ENCODE measurements at regions of chr7 and their contacts with region 1.

Region 1: GRCh38 chr7:123719197-123719721 is 29.5 kb downstream of the WASL start:
- DNase-seq: no peak
- H3K4me3 ChIP-seq: no peak overlapping the region
- H3K27ac ChIP-seq: no peak overlapping the region
- H3K4me1 ChIP-seq: peaks cover 19% of the 10 kb centered on the region
- H3K27me3 ChIP-seq: no peaks in the 10 kb centered on the region
- CTCF ChIP-seq: no peak

Region 2: GRCh38 chr7:123666492-123666891 is 52.8 kb before region 1 on chr7:
- CTCF ChIA-PET with region 1: no interaction called
- dilution Hi-C with region 1: no loop called
- in situ Hi-C with region 1: no loop called
- intact Hi-C with region 1: no loop called
- DNase-seq: peak; percentile 55
- H3K4me3 ChIP-seq: no peak overlapping the region
- H3K27ac ChIP-seq: no peak overlapping the region
- H3K4me1 ChIP-seq: no peaks in the 10 kb centered on the region
- H3K27me3 ChIP-seq: no peaks in the 10 kb centered on the region
- CTCF ChIP-seq: no peak

Region 3: DNA sequence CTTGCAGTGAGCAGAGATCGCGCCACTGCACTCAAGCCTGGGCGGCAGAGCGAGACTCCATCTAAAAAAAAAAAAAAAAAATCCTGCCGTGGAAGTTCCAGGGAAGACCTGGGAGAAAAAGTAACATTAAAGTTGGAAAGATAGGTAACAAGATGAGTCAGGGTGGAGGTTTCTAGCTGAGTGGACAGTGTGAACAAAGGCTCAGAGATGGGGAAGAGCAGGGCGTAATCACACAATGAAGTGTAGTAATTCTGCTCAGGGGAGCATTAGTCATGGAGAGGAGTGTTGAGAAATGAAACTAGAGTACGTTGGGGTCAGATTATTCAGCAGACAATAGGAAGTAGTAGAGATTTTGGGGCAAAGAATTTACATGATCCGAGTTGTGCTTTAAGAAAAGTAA is 51.1 kb after region 1 on chr7:
- CTCF ChIA-PET with region 1: no interaction called
- dilution Hi-C with region 1: no loop called
- in situ Hi-C with region 1: no loop called
- intact Hi-C with region 1: no loop called
- DNase-seq: peak; percentile 97
- H3K4me3 ChIP-seq: no peak overlapping the region
- H3K27ac ChIP-seq: peak overlapping the region; percentile 88
- H3K4me1 ChIP-seq: peaks cover 43% of the 10 kb centered on the region
- H3K27me3 ChIP-seq: no peaks in the 10 kb centered on the region
- CTCF ChIP-seq: no peak

Region 4: GRCh38 chr7:124191713-124192112 is 472.5 kb after region 1 on chr7:
- CTCF ChIA-PET with region 1: interaction called, 16 read pairs
- dilution Hi-C with region 1: no loop called
- in situ Hi-C with region 1: no loop called
- intact Hi-C with region 1: no loop called
- DNase-seq: no peak
- H3K4me3 ChIP-seq: no peak overlapping the region
- H3K27ac ChIP-seq: no peak overlapping the region
- H3K4me1 ChIP-seq: no peaks in the 10 kb centered on the region
- H3K27me3 ChIP-seq: peaks cover 2% of the 10 kb centered on the region
- CTCF ChIP-seq: no peak

Measured in mammary epithelial cell (primary cell).